PC-3 (cell line): ENCODE measurements at regions of chr14 and their contacts with region 1.

Region 1: GRCh38 chr14:42927278-42927677 is 1320.6 kb downstream of the LRFN5 start:
- DNase-seq: peak; percentile 78
- ATAC-seq: peak; percentile 91
- H3K4me3 ChIP-seq: no peak overlapping the region
- H3K27ac ChIP-seq: peak overlapping the region; percentile 36
- H3K4me1 ChIP-seq: peaks cover 16% of the 10 kb centered on the region
- H3K27me3 ChIP-seq: no peaks in the 10 kb centered on the region
- CTCF ChIP-seq: no peak

Region 2: GRCh38 chr14:42994051-42994736 is 66.9 kb after region 1 on chr14:
- CTCF ChIA-PET with region 1: no interaction called
- POLR2A ChIA-PET with region 1: no interaction called
- intact Hi-C with region 1: no loop called
- DNase-seq: peak; percentile 84
- ATAC-seq: peak; percentile 97
- H3K4me3 ChIP-seq: no peak overlapping the region
- H3K27ac ChIP-seq: peak overlapping the region; percentile 56
- H3K4me1 ChIP-seq: peaks cover 19% of the 10 kb centered on the region
- H3K27me3 ChIP-seq: no peaks in the 10 kb centered on the region
- CTCF ChIP-seq: no peak

Region 3: DNA sequence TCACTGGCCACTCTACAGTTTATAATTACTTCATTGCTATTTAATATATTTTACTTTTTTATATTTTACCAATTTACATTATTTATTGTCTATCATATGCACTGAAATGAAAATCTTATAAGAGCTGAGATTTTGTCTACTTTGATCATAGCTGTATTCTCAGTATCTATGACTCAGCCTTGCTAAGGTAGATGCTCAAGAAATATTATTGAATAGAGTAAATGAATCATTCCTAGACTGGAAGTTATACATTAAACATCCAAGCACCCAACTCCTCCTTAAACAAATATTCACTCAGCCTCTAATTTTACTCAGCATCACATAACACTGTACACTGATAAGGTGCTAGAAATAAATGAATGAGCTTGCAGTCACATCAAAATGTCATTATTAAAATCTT is 104.3 kb after region 1 on chr14:
- CTCF ChIA-PET with region 1: no interaction called
- POLR2A ChIA-PET with region 1: interaction called, 10 read pairs
- intact Hi-C with region 1: no loop called
- DNase-seq: peak; percentile 50
- ATAC-seq: peak; percentile 90
- H3K4me3 ChIP-seq: no peak overlapping the region
- H3K27ac ChIP-seq: no peak overlapping the region
- H3K4me1 ChIP-seq: 0 out of 2 replicates have a peak, but pooled peaks cover 3% of the 10 kb centered on the region
- H3K27me3 ChIP-seq: no peaks in the 10 kb centered on the region
- CTCF ChIP-seq: no peak